Activated CD4-positive, alpha-beta memory T cell treated with anti-CD3 and anti-CD28 coated beads for 36 hours (primary cell): ENCODE measurements at regions of chr15 and their contacts with region 1.

Region 1: GRCh38 chr15:79989682-79990081 is 18.7 kb upstream of the BCL2A1 start:
- DNase-seq: no peak
- H3K4me3 Mint-ChIP-seq: no peak overlapping the region
- H3K27ac Mint-ChIP-seq: no peak overlapping the region
- H3K4me1 Mint-ChIP-seq: peaks cover 3% of the 10 kb centered on the region
- H3K27me3 Mint-ChIP-seq: no peaks in the 10 kb centered on the region

Region 2: GRCh38 chr15:79380755-79381497 is 608.8 kb before region 1 on chr15:
- CTCF ChIA-PET with region 1: interaction called, 19 read pairs
- POLR2A ChIA-PET with region 1: no interaction called
- intact Hi-C with region 1: loop called (anchors 1 kb)
- DNase-seq: peak; percentile 81
- H3K4me3 Mint-ChIP-seq: no peak overlapping the region
- H3K27ac Mint-ChIP-seq: no peak overlapping the region
- H3K4me1 Mint-ChIP-seq: peaks cover 4% of the 10 kb centered on the region
- H3K27me3 Mint-ChIP-seq: no peaks in the 10 kb centered on the region

Region 3: GRCh38 chr15:79853458-79854328 is 136.0 kb before region 1 on chr15:
- CTCF ChIA-PET with region 1: interaction called, 66 read pairs
- POLR2A ChIA-PET with region 1: no interaction called
- intact Hi-C with region 1: loop called (anchors 1 kb)
- DNase-seq: peak; percentile 83
- H3K4me3 Mint-ChIP-seq: no peak overlapping the region
- H3K27ac Mint-ChIP-seq: no peak overlapping the region
- H3K4me1 Mint-ChIP-seq: peaks cover 15% of the 10 kb centered on the region
- H3K27me3 Mint-ChIP-seq: no peaks in the 10 kb centered on the region

Region 4: DNA sequence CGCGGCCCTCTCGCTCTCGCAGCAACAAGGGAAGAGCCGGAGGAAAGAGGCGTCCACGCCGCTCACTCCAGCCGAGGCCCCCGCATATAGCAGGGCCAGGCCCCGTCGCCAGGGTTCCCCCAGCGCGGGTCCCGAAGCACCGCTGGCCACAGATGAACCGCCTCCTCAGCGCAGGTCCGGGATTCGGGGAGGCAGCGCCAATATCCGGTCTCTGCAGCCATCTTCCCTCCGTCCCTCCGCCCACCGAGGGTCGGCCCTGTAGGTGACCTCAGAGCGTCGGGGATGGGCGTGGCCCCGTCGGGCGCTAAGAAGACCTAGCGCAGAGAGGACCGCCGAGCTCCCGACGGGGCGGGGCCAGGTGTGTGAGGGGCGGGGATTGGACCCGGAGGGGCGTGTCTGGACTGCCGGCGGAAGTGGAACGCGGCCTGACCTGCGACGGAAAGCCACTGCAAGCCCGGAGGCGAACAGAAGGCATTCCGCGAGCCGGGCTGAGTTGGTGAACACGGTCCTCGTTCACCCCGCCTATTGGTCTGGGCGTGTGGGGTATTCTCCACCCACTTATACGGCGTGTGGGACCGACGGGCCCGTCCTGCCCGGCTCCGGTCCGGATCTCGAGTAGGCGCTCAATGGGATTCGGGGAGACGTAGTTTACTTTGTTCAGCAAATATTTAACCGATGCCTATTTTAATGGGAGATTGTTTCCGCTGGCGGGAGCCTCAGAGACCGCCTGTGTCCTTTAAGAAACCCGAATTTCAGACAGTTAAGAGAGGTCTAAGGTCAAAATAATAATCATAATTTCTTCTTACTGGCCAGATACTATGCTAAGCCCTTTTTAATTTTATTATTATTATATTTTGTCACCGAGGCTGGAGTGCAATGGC is 65.9 kb before region 1 on chr15:
- CTCF ChIA-PET with region 1: interaction called, 14 read pairs
- POLR2A ChIA-PET with region 1: no interaction called
- intact Hi-C with region 1: no loop called
- DNase-seq: peak; percentile 99
- H3K4me3 Mint-ChIP-seq: peak overlapping the region; percentile 93
- H3K27ac Mint-ChIP-seq: peak overlapping the region; percentile 95
- H3K4me1 Mint-ChIP-seq: peaks cover 20% of the 10 kb centered on the region
- H3K27me3 Mint-ChIP-seq: no peaks in the 10 kb centered on the region

Region 5: GRCh38 chr15:80173022-80173759 is 183.5 kb after region 1 on chr15:
- CTCF ChIA-PET with region 1: interaction called, 5 read pairs
- POLR2A ChIA-PET with region 1: no interaction called
- intact Hi-C with region 1: loop called (anchors 2 kb)
- DNase-seq: peak; percentile 84
- H3K4me3 Mint-ChIP-seq: no peak overlapping the region
- H3K27ac Mint-ChIP-seq: no peak overlapping the region
- H3K4me1 Mint-ChIP-seq: no peaks in the 10 kb centered on the region
- H3K27me3 Mint-ChIP-seq: no peaks in the 10 kb centered on the region